ENCODE measurements at regions of chr15 and their contacts with region 1.

Region 1: GRCh38 chr15:29090617-29091466 is 178.8 kb downstream of the NSMCE3 start:
- DNase-seq: peak in 6 of 10 donors; percentile 56 to 90 (median 66)

Region 2: GRCh38 chr15:28921919-28922706 is 168.7 kb before region 1 on chr15:
- intact Hi-C with region 1: loop called (anchors 10 kb)
- DNase-seq: peak in 2 of 10 donors; percentile 58 to 89

Region 3: GRCh38 chr15:28984421-28985315 is 106.2 kb before region 1 on chr15:
- intact Hi-C with region 1: loop called (anchors 5 kb)
- DNase-seq: peak; percentile 81 to 98 (median 89)

Region 4: GRCh38 chr15:29018120-29018805 is 72.6 kb before region 1 on chr15:
- intact Hi-C with region 1: no loop called
- DNase-seq: no peak